Panc1 (cell line): ENCODE measurements at regions of chr9 and their contacts with region 1.

Region 1: DNA sequence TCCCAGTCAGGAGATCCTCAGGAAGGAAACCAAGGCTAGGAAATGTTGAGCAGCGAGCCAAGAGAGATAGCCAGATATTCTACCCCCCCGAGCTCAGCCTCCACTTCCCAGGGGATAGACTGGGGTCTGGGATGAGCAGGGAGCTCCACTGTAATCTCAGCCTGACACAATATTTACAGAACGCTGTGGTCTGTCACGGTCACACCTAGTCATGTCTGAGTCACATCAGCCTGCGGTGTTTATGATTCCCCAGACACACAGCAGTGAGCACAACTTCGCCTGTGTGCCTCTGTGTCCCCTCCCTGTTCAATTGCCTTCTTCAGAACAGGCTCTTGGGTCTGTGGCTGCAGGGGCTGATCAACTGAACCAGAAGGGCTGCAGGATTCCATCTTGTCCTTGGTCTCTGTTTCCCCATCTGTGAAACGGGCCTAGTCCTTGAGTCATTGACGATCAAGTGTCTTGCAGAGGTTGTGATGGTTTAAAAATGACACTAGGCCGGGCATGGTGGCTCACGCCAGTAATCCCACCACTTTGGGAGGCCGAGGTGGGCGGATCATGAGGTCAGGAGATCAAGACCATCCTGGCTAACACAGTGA is 8.6 kb upstream of the PRRX2 start:
- DNase-seq: peak; percentile 53
- ATAC-seq: peak; percentile 95
- H3K4me3 ChIP-seq: no peak overlapping the region
- H3K27ac ChIP-seq: no peak overlapping the region
- H3K4me1 ChIP-seq: peaks cover 3% of the 10 kb centered on the region; the same call in 1 of the 2 replicates
- H3K27me3 ChIP-seq: no peaks in the 10 kb centered on the region
- CTCF ChIP-seq: no peak

Region 2: DNA sequence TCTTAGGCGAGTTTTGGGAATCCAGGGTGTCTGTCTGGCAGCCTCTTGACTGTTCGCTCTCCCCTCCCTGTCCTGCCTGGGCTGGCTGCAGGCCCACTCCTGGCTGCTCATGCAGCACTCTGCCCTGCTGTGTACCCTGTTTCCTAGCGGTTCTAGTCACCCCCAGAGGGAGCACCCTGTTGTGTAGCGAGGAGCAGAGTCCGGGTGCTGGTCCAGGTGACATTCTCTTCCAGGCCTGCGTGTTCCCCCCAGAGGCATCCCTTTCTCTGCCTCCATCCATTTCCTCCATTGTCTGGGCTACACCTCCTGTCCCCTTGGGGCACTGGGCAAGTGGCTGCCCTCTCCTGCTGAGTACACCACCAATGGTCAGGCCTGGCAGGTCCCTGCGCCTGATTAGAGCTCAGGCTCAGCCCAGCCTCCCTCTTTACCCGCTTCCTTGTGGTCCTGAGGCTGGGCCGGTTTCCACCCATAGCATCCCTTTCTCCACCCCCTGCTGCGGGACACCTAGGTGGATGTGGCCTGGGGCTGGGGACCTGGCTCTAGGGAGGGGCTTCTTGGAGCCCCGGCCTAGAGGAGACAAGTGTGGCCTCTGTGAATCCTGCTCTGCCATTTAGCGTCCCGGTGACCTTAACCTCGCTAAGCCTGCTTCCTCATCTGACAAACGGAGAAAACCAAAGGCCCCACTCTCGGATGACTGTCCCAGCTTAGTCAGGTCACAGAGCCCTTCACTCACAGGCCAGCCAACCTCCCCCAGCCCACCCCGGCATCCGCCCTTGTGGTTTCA is 563.3 kb before region 1 on chr9:
- CTCF ChIA-PET with region 1: interaction called, 10 read pairs
- POLR2A ChIA-PET with region 1: no interaction called
- in situ Hi-C with region 1: no loop called
- intact Hi-C with region 1: no loop called
- DNase-seq: no peak
- ATAC-seq: peak; percentile 20; the same call in 1 of the 2 replicates
- H3K4me3 ChIP-seq: no peak overlapping the region
- H3K27ac ChIP-seq: no peak overlapping the region
- H3K4me1 ChIP-seq: no peaks in the 10 kb centered on the region
- H3K27me3 ChIP-seq: no peaks in the 10 kb centered on the region
- CTCF ChIP-seq: no peak

Region 3: DNA sequence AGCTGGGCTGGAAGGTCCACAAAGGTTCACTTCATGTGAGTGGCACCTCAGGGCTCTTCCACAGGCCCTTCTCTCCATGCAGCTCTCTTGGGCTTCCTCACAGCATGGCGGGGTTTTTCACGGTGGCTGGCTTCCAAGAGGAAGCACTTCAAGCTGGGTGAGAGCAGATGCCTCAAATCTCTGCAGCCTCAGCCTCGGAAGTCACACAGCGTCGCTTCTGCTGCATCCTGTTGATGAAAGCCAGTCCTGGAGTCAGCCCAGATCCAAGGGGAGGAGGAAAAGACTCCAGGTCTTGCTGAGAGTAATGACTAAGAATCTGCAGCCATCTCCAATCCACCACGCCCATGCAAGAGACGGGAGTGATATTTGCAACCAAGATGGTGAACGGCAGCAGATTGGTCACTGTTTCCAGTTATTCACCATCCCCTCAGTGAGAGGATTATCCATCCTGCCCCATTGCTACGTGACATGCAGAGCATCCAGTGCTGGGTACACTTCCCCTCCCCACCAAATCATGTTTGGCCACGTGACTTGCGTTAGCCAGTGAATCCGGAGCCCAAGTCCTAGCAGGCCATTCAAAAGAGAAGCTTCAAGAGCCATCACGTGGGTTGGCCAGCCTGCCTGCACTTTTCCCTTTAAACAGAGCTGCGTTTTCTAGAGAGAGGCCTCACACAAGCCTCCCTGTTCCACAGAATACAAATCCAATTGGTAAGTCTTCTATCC is 209.9 kb before region 1 on chr9:
- CTCF ChIA-PET with region 1: no interaction called
- POLR2A ChIA-PET with region 1: no interaction called
- in situ Hi-C with region 1: no loop called
- intact Hi-C with region 1: no loop called
- DNase-seq: no peak
- ATAC-seq: no peak
- H3K4me3 ChIP-seq: no peak overlapping the region
- H3K27ac ChIP-seq: no peak overlapping the region
- H3K4me1 ChIP-seq: peaks cover 16% of the 10 kb centered on the region
- H3K27me3 ChIP-seq: no peaks in the 10 kb centered on the region
- CTCF ChIP-seq: no peak